Activated CD4-positive, alpha-beta memory T cell treated with anti-CD3 and anti-CD28 coated beads, Interleukin-2, amount 10 ng/mL, durations not matched to agents 7 days and 5 days (primary cell): ENCODE measurements at regions of chr2 and their contacts with region 1.

Region 1: GRCh38 chr2:46029332-46029811 is 267.8 kb upstream of the EPAS1 start:
- DNase-seq: no peak
- H3K4me3 Mint-ChIP-seq: no peak overlapping the region
- H3K27ac Mint-ChIP-seq: no peak overlapping the region
- H3K4me1 Mint-ChIP-seq: peaks cover 51% of the 10 kb centered on the region
- H3K27me3 Mint-ChIP-seq: no peaks in the 10 kb centered on the region

Region 2: DNA sequence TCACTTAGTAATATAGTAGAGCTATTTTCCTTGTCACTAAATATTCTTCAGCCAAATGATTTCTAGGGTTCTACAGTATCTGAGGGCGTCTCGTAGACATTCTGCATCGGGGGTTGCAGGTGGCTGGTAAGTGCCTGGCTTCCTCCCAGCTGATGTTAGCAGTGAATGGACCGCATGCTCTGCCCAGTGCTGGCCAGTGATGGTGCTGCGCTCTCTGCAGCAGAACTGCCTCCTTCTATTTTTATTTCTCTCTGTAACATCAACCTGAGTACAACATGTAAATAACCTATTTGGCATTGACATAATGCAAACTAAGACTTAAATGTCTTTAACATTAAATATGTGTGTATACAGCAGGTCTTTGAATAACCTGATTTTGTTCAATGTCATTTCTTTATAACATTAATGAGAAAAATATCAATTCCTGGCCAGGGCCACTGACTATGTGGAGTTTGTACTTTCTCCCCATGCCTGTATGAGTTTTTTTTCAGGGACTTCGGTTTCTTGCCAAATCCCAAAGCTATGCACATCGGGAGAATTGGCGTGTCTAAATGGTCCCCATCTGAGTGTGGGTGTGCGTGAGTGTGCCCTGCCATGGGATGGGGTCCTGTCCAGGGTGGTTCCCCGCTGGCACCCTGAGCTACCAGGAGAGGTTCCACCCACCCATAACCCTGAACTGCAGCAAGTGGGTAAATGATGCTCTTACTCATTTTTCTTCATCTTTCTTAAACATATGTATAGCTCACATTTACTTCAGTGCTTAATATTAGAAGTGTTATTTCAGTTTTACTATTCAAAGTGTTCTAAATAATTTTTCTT is 10.4 kb before region 1 on chr2:
- CTCF ChIA-PET with region 1: interaction called, 4 read pairs
- POLR2A ChIA-PET with region 1: interaction called, 15 read pairs
- DNase-seq: no peak
- H3K4me3 Mint-ChIP-seq: peak overlapping the region; percentile 21
- H3K27ac Mint-ChIP-seq: peak overlapping the region; percentile 91
- H3K4me1 Mint-ChIP-seq: peaks cover 77% of the 10 kb centered on the region
- H3K27me3 Mint-ChIP-seq: no peaks in the 10 kb centered on the region